Caco-2 (cell line): ENCODE measurements at regions of chr10 and their contacts with region 1.

Region 1: DNA sequence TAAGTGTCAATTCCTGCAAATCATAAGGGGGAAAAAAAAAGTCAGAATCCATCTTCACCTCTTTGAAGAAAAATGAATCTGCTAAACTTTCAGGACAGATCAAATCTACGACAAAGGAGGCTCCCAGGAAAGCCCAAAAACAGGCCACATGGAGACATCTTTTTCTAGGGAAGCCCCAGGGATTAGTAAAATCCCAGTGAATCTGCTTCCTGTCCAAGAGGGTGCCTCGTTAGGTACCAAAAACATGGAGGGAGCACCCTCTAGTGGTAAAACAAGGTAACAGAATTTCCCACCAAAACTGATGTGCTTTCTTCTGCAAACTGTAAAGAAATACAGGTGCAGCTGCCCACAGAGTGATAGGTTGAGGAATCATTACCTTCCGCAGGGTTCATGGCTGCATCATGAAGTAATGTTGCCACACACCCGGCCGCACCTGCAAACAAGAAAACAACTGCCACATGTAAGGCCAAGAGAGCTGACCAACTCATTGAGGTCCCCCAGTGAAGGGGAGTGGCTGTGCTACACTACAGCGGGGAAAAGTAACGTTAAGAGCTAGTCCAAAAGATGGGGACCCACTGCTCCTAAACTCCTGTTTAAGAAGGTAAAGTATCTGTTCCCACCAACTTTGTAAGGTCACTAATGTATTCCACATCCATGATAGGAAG is 7.9 kb downstream of the SLC25A28 start:
- DNase-seq: peak in 1 of 2 experiments; percentile 76
- H3K4me3 ChIP-seq: no peak overlapping the region
- H3K4me3 Mint-ChIP-seq: no peak overlapping the region
- H3K27ac Mint-ChIP-seq: no peak overlapping the region
- H3K4me1 ChIP-seq: no peaks in the 10 kb centered on the region
- H3K4me1 Mint-ChIP-seq: no peaks in the 10 kb centered on the region
- H3K27me3 ChIP-seq: no peaks in the 10 kb centered on the region
- H3K27me3 Mint-ChIP-seq: no peaks in the 10 kb centered on the region
- CTCF ChIP-seq: peak; percentile 77 to 81

Region 2: DNA sequence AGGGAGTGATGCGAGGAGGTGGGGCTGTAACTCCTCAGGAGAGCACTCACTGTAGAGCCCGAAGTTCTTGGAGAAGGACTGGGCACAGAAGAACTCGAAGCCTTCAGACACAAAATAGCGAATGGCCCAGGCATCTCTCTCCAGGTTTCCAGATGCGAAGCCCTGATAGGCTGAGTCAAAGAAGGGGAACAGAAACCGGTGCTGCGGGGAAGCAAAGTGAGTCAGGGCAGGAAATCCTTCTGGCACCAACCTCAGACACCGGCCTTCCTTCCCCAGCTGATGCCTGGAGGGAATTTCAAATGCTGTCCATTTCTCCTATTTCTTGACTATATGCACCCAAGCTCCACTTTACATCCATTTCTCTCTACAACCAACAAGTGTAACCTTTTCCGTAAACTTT is 208.6 kb before region 1 on chr10:
- CTCF ChIA-PET with region 1: no interaction called
- POLR2A ChIA-PET with region 1: no interaction called
- intact Hi-C with region 1: no loop called
- DNase-seq: no peak
- H3K4me3 ChIP-seq: no peak overlapping the region
- H3K4me3 Mint-ChIP-seq: no peak overlapping the region
- H3K27ac Mint-ChIP-seq: no peak overlapping the region
- H3K4me1 ChIP-seq: no peaks in the 10 kb centered on the region
- H3K4me1 Mint-ChIP-seq: no peaks in the 10 kb centered on the region
- H3K27me3 ChIP-seq: no peaks in the 10 kb centered on the region
- H3K27me3 Mint-ChIP-seq: no peaks in the 10 kb centered on the region
- CTCF ChIP-seq: no peak

Region 3: GRCh38 chr10:99560277-99561126 is 51.8 kb before region 1 on chr10:
- CTCF ChIA-PET with region 1: interaction called, 12 read pairs
- POLR2A ChIA-PET with region 1: interaction called, 4 read pairs
- intact Hi-C with region 1: loop called (anchors 1 kb)
- DNase-seq: peak; percentile 70 to 80
- H3K4me3 ChIP-seq: no peak overlapping the region
- H3K4me3 Mint-ChIP-seq: no peak overlapping the region
- H3K27ac Mint-ChIP-seq: no peak overlapping the region
- H3K4me1 ChIP-seq: peaks cover 7% of the 10 kb centered on the region; the same call in 1 of the 2 replicates
- H3K4me1 Mint-ChIP-seq: no peaks in the 10 kb centered on the region
- H3K27me3 ChIP-seq: no peaks in the 10 kb centered on the region
- H3K27me3 Mint-ChIP-seq: no peaks in the 10 kb centered on the region
- CTCF ChIP-seq: peak; percentile 81 to 87